HepG2 (cell line): ENCODE measurements at regions of chr22 and their contacts with region 1.

Region 1: DNA sequence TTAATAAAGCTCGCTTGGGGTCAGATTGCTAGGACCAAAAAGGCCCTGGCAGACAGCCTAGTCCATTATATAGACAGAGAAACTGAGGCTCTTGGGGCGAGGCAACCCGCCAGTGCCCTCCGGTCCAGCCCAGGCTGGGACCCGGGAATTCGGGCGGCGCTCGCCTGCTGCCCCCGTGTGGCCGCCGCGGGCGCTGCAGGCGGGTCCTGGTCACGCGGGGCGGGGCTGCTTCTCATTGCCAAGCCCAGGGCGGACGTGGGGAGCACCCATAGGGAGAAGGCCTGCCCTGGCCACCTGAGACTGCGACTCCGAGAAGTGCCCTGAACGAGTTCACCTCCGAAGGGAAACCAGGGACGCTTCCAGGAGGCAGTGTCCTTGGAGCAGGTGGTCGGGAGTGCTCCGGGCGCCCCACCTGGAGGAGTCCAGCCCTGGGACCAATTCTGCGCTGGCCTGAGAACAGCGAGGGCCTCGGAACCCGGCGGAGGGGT is 36.0 kb upstream of the CSNK1E start:
- DNase-seq: no peak
- ATAC-seq: peak; percentile 46
- H3K4me3 ChIP-seq: no peak overlapping the region
- H3K27ac ChIP-seq: no peak overlapping the region
- H3K4me1 ChIP-seq: peaks cover 41% of the 10 kb centered on the region
- H3K27me3 ChIP-seq: no peaks in the 10 kb centered on the region; a peak in 1 of 5 replicates
- CTCF ChIP-seq: peak; percentile 89
- EP300 ChIP-seq: no peak
- POLR2A ChIP-seq: no peak
- RAD21 ChIP-seq: peak; percentile 95

Region 2: GRCh38 chr22:38051900-38052862 is 301.0 kb before region 1 on chr22:
- CTCF ChIA-PET with region 1: interaction called, 12 read pairs
- POLR2A ChIA-PET with region 1: no interaction called
- in situ Hi-C with region 1: loop called (anchors 10 kb)
- intact Hi-C with region 1: loop called (anchors 2 kb)
- DNase-seq: peak; percentile 84
- ATAC-seq: peak; percentile 89
- H3K4me3 ChIP-seq: peak overlapping the region in 2 of 3 experiments; percentile 27 to 57; a peak in 3 of 6 replicates
- H3K27ac ChIP-seq: no peak overlapping the region
- H3K4me1 ChIP-seq: peaks cover 43% of the 10 kb centered on the region
- H3K27me3 ChIP-seq: peaks cover 2 to 22% of the 10 kb centered on the region in 2 experiments; a peak in 3 of 5 replicates
- CTCF ChIP-seq: peak; percentile 100
- EP300 ChIP-seq: no peak
- POLR2A ChIP-seq: no peak
- RAD21 ChIP-seq: peak; percentile 99

Region 3: GRCh38 chr22:38262051-38262795 is 91.0 kb before region 1 on chr22:
- CTCF ChIA-PET with region 1: interaction called, 18 read pairs
- POLR2A ChIA-PET with region 1: no interaction called
- in situ Hi-C with region 1: loop called (anchors 5 kb)
- intact Hi-C with region 1: loop called (anchors 2 kb)
- DNase-seq: peak; percentile 54
- ATAC-seq: peak; percentile 87
- H3K4me3 ChIP-seq: peak overlapping the region; percentile 15 to 53 (median 25); a peak in 3 of 6 replicates
- H3K27ac ChIP-seq: peak overlapping the region; percentile 73
- H3K4me1 ChIP-seq: peaks cover 63% of the 10 kb centered on the region
- H3K27me3 ChIP-seq: no peaks in the 10 kb centered on the region
- CTCF ChIP-seq: peak; percentile 91
- EP300 ChIP-seq: no peak
- POLR2A ChIP-seq: no peak
- RAD21 ChIP-seq: peak; percentile 80

Region 4: DNA sequence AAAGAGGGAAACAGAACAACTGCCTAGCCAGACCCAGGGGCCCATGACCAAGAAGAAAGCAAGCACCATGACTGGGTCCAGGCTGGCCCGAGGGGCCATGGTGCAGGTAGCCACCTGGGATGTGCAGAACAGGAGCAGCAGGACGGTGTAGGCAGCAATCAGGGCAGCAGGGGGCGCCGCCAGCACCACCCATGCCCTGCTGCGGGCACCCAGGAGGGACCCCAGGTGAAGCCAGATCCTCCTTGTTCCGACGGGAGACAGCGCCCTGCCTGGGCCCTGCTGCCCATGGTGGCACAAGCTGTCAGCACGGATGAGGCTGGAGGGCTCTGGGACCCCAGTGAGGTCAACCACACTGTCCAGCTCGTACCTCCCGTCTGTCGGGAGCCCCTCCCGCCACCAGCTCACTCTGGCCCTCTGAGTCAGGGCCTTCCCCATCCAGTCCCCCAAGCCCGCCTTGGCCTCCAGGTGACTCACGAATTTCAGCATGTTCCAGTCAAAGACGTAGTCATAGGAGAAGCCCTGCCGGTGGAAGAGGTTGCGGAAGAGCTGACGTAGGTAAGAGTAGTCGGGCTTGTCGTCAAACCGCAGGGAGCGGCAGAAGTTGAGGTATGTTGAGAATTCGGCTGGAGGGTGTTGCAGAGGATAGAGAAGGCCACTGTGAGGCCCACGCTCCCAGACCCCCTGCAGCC is 54.7 kb before region 1 on chr22:
- CTCF ChIA-PET with region 1: interaction called, 9 read pairs
- POLR2A ChIA-PET with region 1: no interaction called
- in situ Hi-C with region 1: loop called (anchors 5 kb)
- intact Hi-C with region 1: loop called (anchors 2 kb)
- DNase-seq: no peak
- ATAC-seq: peak; percentile 76
- H3K4me3 ChIP-seq: no peak overlapping the region
- H3K27ac ChIP-seq: no peak overlapping the region
- H3K4me1 ChIP-seq: no peaks in the 10 kb centered on the region
- H3K27me3 ChIP-seq: no peaks in the 10 kb centered on the region
- CTCF ChIP-seq: peak; percentile 78
- EP300 ChIP-seq: no peak
- POLR2A ChIP-seq: no peak
- RAD21 ChIP-seq: peak; percentile 75

Region 5: DNA sequence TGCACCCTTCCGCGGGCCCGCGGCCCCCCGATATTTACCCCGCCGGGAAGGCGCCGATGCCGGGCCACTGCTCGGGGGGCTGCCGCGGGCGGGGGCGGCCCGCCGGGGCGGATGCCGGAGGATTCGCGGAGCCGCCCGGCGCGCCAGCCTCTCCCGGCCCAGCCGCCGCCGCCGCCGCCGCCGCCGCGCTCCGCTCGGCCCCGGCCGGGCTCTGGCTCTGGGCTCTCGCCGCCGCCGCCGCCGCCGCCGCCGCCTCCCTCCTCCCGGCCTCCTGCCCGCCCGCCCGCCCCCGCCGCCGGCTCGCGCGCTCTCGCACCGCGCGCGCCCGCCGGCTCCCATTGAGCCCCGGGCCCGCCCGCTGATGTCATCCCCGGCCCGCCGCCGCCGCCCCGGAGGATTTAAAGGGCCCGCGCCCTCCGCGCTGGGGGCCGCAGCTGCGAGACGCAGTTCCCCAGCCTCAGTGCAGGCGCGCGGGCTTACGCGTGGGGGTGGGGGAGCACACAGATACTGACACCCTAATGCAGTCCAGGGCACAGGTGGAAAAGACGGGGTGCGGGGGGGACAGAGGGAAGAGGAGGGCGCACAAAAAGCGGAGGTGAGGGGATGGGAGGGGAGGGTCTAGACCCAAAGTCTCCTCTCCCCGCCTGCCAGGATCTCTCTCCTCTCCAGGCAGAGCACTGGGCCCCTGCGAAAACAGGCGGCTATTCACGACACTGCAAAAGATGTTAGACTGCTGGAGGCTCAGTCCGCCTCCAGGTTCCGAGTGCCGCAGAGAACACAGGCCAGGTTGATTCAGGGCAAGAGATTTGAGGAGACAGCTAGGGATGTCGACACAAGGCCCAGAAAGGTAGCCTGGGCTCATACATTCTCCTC is 35.8 kb before region 1 on chr22 and contains the start of gene CSNK1E:
- CTCF ChIA-PET with region 1: no interaction called
- POLR2A ChIA-PET with region 1: no interaction called
- in situ Hi-C with region 1: no loop called
- intact Hi-C with region 1: loop called (anchors 5 kb)
- DNase-seq: no peak
- ATAC-seq: peak; percentile 33
- H3K4me3 ChIP-seq: peak within 1 kb of the TSS; percentile 64 to 86 (median 77)
- H3K27ac ChIP-seq: peak within 1 kb of the TSS; percentile 89
- H3K4me1 ChIP-seq: peaks cover 70% of the 10 kb centered on the region
- H3K27me3 ChIP-seq: no peaks in the 10 kb centered on the region; a peak in 2 of 5 replicates
- CTCF ChIP-seq: no peak
- EP300 ChIP-seq: no peak
- POLR2A ChIP-seq: peak in 1 of 2 experiments; percentile 55; a peak in 2 of 4 replicates
- RAD21 ChIP-seq: no peak
- total RNA-seq, gene CSNK1E: 19.8 and 34.7 TPM in 2 replicates

Region 6: DNA sequence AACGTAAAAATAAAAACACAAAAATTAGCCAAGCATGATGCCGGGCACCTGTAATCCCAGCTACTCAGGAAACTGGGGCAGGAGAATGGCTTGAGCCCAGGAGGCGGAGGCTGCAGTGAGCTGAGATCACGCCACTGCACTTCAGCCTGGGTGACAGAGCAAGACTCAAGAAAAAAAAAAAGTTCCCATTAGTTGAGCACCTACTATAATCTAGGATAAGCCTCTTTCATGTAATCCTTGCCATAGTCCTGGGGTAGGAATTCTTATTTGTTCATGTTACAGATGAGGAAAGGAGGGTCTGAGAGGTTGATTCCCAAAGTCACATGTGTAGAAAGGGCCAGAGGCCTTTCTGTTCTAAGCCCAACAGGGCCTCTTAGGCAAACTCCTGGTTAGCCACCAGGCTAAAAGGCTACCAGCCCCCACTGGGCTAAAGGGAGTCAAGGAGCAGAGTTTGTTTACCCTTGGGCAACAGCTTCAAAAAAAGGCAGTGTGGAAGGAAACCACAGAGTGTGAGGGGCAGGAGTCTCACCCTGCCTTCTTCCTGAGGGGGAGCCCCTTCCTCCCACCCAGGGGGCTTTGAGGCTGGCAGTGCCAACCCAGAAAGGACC is 14.3 kb before region 1 on chr22:
- CTCF ChIA-PET with region 1: no interaction called
- POLR2A ChIA-PET with region 1: no interaction called
- in situ Hi-C with region 1: no loop called
- intact Hi-C with region 1: no loop called
- DNase-seq: no peak
- ATAC-seq: peak; percentile 38; the same call in 2 of the 3 replicates
- H3K4me3 ChIP-seq: no peak overlapping the region
- H3K27ac ChIP-seq: no peak overlapping the region
- H3K4me1 ChIP-seq: peaks cover 38% of the 10 kb centered on the region
- H3K27me3 ChIP-seq: peaks cover 0 to 13% of the 10 kb centered on the region in 2 experiments; a peak in 1 of 5 replicates
- CTCF ChIP-seq: no peak
- EP300 ChIP-seq: no peak
- POLR2A ChIP-seq: no peak
- RAD21 ChIP-seq: no peak

Region 7: GRCh38 chr22:38422611-38423511 is 69.7 kb after region 1 on chr22:
- CTCF ChIA-PET with region 1: no interaction called
- POLR2A ChIA-PET with region 1: no interaction called
- in situ Hi-C with region 1: no loop called
- intact Hi-C with region 1: no loop called
- DNase-seq: no peak
- ATAC-seq: peak; percentile 56
- H3K4me3 ChIP-seq: peak overlapping the region; percentile 35 to 69 (median 38); a peak in 5 of 6 replicates
- H3K27ac ChIP-seq: no peak overlapping the region
- H3K4me1 ChIP-seq: peaks cover 52% of the 10 kb centered on the region
- H3K27me3 ChIP-seq: peaks cover 0 to 11% of the 10 kb centered on the region in 2 experiments; a peak in 2 of 5 replicates
- CTCF ChIP-seq: no peak
- EP300 ChIP-seq: no peak
- POLR2A ChIP-seq: no peak
- RAD21 ChIP-seq: no peak

Region 8: GRCh38 chr22:38490915-38491314 is 137.7 kb after region 1 on chr22:
- CTCF ChIA-PET with region 1: no interaction called
- POLR2A ChIA-PET with region 1: no interaction called
- in situ Hi-C with region 1: no loop called
- intact Hi-C with region 1: no loop called
- DNase-seq: peak; percentile 83
- ATAC-seq: peak; percentile 58
- H3K4me3 ChIP-seq: no peak overlapping the region
- H3K27ac ChIP-seq: peak overlapping the region; percentile 34
- H3K4me1 ChIP-seq: peaks cover 34% of the 10 kb centered on the region
- H3K27me3 ChIP-seq: no peaks in the 10 kb centered on the region
- CTCF ChIP-seq: no peak
- EP300 ChIP-seq: no peak
- POLR2A ChIP-seq: no peak
- RAD21 ChIP-seq: no peak